Aorta (tissue), 5 donors: ENCODE measurements at regions of chr14 and their contacts with region 1.

Region 1: GRCh38 chr14:88831284-88831683 is 6.8 kb downstream of the TTC8 start:
- DNase-seq: peak in 1 of 2 donors; percentile 53
- ATAC-seq: peak; percentile 71
- H3K4me3 ChIP-seq: no peak overlapping the region
- H3K27ac ChIP-seq: peak overlapping the region; percentile 43 to 77
- H3K4me1 ChIP-seq: peaks cover 0 to 5% of the 10 kb centered on the region in 2 donors
- H3K27me3 ChIP-seq: no peaks in the 10 kb centered on the region

Region 2: GRCh38 chr14:88551094-88551870 is 280.0 kb before region 1 on chr14:
- intact Hi-C with region 1: loop called in 1 of 2 experiments (anchors 5 kb)
- DNase-seq: peak; percentile 84 to 92
- ATAC-seq: peak; percentile 92
- H3K4me3 ChIP-seq: peak overlapping the region; percentile 43 to 55
- H3K27ac ChIP-seq: no peak overlapping the region
- H3K4me1 ChIP-seq: peaks cover 0 to 4% of the 10 kb centered on the region in 2 donors
- H3K27me3 ChIP-seq: no peaks in the 10 kb centered on the region

Region 3: DNA sequence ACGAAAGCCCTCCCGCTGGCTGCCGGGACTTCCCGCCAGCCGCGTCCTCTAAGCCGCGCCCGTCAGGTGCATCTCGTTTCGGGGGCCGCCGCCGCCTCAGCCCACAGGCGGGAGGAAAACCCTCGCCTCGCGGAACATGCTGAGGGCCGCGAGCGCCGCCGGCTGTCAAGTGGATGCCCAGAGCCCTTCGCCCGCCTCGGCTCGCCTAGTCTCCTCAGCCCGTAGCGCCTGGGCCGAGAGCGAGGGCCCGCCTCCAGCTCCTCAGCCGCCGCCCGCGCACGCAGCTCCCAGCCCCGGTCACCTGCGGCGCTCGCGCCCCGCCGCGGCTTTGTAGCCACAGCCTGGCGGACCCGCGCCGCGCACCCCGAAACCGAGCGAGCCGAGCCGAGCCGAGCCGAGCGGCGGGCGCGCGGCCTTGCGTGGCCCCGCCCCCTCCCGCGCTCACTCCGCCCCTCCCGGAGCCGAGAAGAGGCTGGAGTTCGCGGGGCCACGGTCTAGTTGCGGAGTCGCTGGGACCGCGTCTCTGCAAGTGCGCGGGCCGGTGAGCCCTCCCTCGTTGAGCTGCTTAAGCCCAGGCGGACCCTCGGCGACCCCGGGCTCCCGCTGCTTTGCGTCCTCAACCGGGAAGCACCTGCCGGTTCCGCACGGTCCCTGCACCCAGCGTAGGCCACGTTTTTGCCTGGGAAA is 38.6 kb before region 1 on chr14 and contains the start of gene EML5:
- intact Hi-C with region 1: no loop called
- DNase-seq: peak; percentile 83 to 94
- ATAC-seq: peak; percentile 94
- H3K4me3 ChIP-seq: peak within 1 kb of the TSS; percentile 46 to 62
- H3K27ac ChIP-seq: peak within 1 kb of the TSS in 1 of 2 donors; percentile 14
- H3K4me1 ChIP-seq: no peaks in the 10 kb centered on the region
- H3K27me3 ChIP-seq: no peaks in the 10 kb centered on the region
- total RNA-seq, gene EML5: 0.39 to 1.6 TPM